ENCODE measurements at regions of chr20 and their contacts with region 1.

Region 1: GRCh38 chr20:20083807-20084206 is 31.5 kb downstream of the CFAP61 start:
- DNase-seq: no peak
- H3K4me3 ChIP-seq: no peak overlapping the region
- H3K27ac ChIP-seq: peak overlapping the region in 1 of 4 donors; percentile 33
- H3K4me1 ChIP-seq: peaks cover 0 to 20% (median 1%) of the 10 kb centered on the region in 4 donors
- H3K27me3 ChIP-seq: no peaks in the 10 kb centered on the region
- CTCF ChIP-seq: peak in 2 of 4 experiments; percentile 17 to 24
- EP300 ChIP-seq: no peak
- POLR2A ChIP-seq: no peak

Region 2: DNA sequence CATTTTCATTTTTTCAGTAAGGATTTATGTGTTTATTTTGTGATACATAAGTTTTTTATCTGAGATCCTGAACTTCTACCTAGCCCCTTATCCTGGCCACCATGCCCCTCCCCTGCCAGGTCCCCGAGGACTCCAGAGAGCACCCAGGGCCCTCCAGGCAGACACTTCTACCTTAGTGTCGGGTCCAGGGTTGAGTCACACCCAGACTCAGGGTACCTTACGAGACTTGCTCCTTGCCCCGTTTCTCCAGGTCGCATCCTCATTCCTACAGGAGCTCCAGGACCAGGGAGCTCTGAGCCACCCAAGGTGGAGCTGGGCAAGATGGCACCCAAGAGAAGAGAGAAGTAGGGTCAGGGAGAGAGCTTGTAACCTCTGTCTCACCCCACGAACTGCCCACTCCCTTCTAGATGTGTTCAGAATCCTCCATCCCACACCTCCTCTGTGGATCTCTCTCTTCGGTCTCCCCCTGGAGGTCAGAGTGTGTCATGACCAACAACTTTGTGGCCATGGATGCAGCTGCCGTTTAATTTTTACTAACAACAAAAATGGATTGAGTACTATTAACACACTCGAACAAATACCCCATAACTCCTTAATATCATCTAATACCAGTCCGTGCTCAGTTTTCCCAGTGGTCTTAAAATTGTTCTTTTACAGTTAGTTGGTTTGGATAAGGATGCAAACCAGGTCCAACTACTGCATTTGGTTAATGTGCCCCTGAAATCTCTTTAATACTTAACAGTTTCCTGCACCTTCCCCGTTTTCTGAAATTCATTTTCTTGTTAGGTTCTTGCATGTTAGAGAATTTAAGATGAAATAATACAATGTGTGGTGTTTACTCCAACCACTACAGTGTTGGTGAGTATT is 153.5 kb after region 1 on chr20:
- intact Hi-C with region 1: loop called (anchors 5 kb)
- DNase-seq: no peak
- H3K4me3 ChIP-seq: no peak overlapping the region
- H3K27ac ChIP-seq: no peak overlapping the region
- H3K4me1 ChIP-seq: no peaks in the 10 kb centered on the region
- H3K27me3 ChIP-seq: no peaks in the 10 kb centered on the region
- CTCF ChIP-seq: peak; percentile 27 to 52 (median 38)
- EP300 ChIP-seq: no peak
- POLR2A ChIP-seq: no peak

Region 3: DNA sequence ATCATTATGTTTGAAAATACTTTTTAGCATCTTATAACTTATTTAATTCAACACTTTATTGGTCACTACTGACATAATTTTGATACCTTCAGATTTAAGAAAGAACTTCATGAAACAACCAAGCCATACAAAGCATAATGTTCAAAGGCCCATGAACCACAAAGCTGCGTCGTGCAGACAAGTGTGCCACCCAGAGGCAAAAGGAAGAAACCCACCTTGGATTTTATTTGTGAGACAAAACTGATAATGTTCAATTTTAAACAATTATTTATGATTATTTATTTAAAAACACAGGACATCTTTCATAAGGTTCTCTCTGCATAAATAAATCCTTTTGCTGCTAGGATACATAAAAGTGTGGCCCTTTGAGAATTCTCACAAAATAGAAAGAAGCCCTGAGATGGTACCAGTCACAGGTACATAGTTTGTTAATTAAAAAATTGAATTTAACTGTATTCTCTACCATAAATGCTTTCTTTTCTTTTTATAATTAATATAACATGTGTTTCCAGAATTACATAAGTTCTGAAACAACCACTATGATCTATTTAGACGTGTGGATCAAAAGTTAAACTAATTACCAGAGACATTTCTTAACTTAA is 484.9 kb after region 1 on chr20:
- intact Hi-C with region 1: loop called (anchors 5 kb)
- DNase-seq: no peak
- H3K4me3 ChIP-seq: no peak overlapping the region
- H3K27ac ChIP-seq: no peak overlapping the region
- H3K4me1 ChIP-seq: no peaks in the 10 kb centered on the region
- H3K27me3 ChIP-seq: no peaks in the 10 kb centered on the region
- CTCF ChIP-seq: peak in 2 of 4 experiments; percentile 43 to 54
- EP300 ChIP-seq: no peak
- POLR2A ChIP-seq: no peak

Measured in sigmoid colon (tissue), 7 donors.